CD8-positive, alpha-beta T cell (primary cell): ENCODE measurements at regions of chr16 and their contacts with region 1.

Region 1: DNA sequence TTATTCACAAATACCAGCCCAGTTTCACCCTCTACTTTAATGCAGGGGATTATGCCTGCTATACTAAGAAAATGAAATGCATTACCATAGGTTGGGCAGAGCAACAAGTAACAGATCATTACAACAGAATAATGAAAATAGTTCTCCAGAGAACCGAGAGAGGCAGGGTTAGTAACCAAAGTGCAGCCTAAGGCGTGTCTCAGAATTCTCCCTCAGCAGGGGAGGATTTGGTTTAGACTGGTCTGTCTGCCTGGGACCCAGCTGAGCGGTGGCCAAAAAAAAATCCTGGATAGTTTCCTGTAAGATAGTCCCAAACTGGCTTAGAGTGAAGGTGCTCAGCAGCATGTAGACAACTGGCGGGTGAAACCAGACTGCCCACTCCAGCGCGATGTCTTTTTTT is 30.8 kb upstream of the ADCY7 start:
- DNase-seq: no peak
- ATAC-seq: no peak
- H3K4me3 ChIP-seq: no peak overlapping the region
- H3K4me3 Mint-ChIP-seq: no peak overlapping the region
- H3K27ac ChIP-seq: no peak overlapping the region
- H3K27ac Mint-ChIP-seq: no peak overlapping the region
- H3K4me1 ChIP-seq: no peaks in the 10 kb centered on the region
- H3K4me1 Mint-ChIP-seq: no peaks in the 10 kb centered on the region
- H3K27me3 ChIP-seq: no peaks in the 10 kb centered on the region
- H3K27me3 Mint-ChIP-seq: no peaks in the 10 kb centered on the region
- CTCF ChIP-seq: no peak

Region 2: GRCh38 chr16:50204453-50205108 is 31.0 kb before region 1 on chr16:
- CTCF ChIA-PET with region 1: interaction called, 3 read pairs
- POLR2A ChIA-PET with region 1: no interaction called
- intact Hi-C with region 1: loop called in 1 of 2 experiments (anchors 1 kb)
- DNase-seq: no peak
- ATAC-seq: no peak
- H3K4me3 ChIP-seq: no peak overlapping the region
- H3K4me3 Mint-ChIP-seq: no peak overlapping the region
- H3K27ac ChIP-seq: no peak overlapping the region
- H3K27ac Mint-ChIP-seq: peak overlapping the region; percentile 53
- H3K4me1 ChIP-seq: peaks cover 27% of the 10 kb centered on the region
- H3K4me1 Mint-ChIP-seq: peaks cover 62% of the 10 kb centered on the region
- H3K27me3 ChIP-seq: no peaks in the 10 kb centered on the region
- H3K27me3 Mint-ChIP-seq: no peaks in the 10 kb centered on the region
- CTCF ChIP-seq: no peak